Activated CD8-positive, alpha-beta memory T cell treated with anti-CD3 and anti-CD28 coated beads, Interleukin-2, amount 10 ng/mL, durations not matched to agents 7 days and 5 days (primary cell): ENCODE measurements at regions of chr1 and their contacts with region 1.

Region 1: DNA sequence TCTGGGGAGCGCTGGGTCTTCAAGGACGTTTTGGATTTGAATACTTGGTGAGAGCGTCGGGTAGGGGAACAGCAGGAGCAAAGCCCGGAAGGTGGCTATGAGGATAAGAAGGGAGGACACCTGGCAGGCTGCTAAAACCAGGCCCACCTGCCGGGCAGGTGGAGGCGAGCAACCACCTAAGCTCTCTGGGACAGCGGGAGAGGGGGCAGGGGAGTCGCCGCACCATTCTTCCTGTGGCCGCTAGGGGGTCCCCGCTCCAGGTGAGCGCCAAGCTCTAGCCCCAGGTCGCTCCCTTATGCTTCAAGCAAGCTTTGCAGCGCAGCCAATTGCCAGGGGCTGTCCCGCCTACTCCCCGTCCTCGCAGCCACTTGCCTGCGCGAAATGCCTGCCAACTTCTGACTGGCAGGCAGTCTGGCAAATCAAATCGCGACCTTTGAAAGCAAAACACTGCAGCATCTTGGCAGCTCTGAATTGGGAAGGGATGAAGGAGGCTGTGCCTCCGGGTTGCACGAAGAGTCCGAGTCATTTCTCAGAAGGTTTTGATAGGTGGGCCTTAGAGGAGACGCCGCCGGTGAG is at the start of gene NIPAL3:
- DNase-seq: peak; percentile 100
- ATAC-seq: peak; percentile 97
- H3K4me3 Mint-ChIP-seq: peak within 1 kb of the TSS; percentile 90
- H3K27ac Mint-ChIP-seq: peak within 1 kb of the TSS; percentile 87
- H3K4me1 Mint-ChIP-seq: peaks cover 53% of the 10 kb centered on the region
- H3K27me3 Mint-ChIP-seq: no peaks in the 10 kb centered on the region
- total RNA-seq, gene NIPAL3: 35.4 to 44.2 TPM

Region 2: DNA sequence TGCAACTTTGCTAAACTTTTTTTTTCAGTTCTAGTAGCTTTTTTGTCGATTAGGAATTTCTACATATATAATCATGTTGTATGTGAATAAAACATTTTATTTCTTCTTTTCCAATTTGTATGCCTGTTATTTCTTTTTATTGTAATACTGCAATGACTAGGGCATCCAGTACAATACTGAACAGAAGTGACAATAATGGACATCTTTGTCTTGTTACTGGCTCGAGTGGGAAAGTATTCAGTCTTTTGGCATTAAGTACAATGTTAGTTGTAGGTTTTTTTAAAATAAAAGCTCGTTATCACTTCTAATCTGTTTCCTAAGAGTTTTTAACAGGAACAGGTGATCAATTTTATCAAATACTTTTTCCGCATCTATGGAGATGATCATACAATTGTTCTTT is 11.6 kb before region 1 on chr1:
- CTCF ChIA-PET with region 1: interaction called, 15 read pairs
- DNase-seq: no peak
- ATAC-seq: no peak
- H3K4me3 Mint-ChIP-seq: no peak overlapping the region
- H3K27ac Mint-ChIP-seq: no peak overlapping the region
- H3K4me1 Mint-ChIP-seq: no peaks in the 10 kb centered on the region
- H3K27me3 Mint-ChIP-seq: no peaks in the 10 kb centered on the region

Region 3: GRCh38 chr1:24481101-24481500 is 65.7 kb after region 1 on chr1:
- CTCF ChIA-PET with region 1: interaction called, 18 read pairs
- DNase-seq: peak; percentile 70
- ATAC-seq: peak; percentile 67
- H3K4me3 Mint-ChIP-seq: peak overlapping the region; percentile 66
- H3K27ac Mint-ChIP-seq: peak overlapping the region; percentile 96
- H3K4me1 Mint-ChIP-seq: peaks cover 43% of the 10 kb centered on the region
- H3K27me3 Mint-ChIP-seq: no peaks in the 10 kb centered on the region

Region 4: GRCh38 chr1:24502709-24503058 is 87.3 kb after region 1 on chr1 and contains the start of gene RCAN3:
- CTCF ChIA-PET with region 1: interaction called, 72 read pairs
- DNase-seq: peak; percentile 95
- ATAC-seq: peak; percentile 87
- H3K4me3 Mint-ChIP-seq: peak within 1 kb of the TSS; percentile 95
- H3K27ac Mint-ChIP-seq: peak within 1 kb of the TSS; percentile 96
- H3K4me1 Mint-ChIP-seq: peaks cover 73% of the 10 kb centered on the region
- H3K27me3 Mint-ChIP-seq: no peaks in the 10 kb centered on the region
- total RNA-seq, gene RCAN3: 23.9 to 30.6 TPM

Region 5: DNA sequence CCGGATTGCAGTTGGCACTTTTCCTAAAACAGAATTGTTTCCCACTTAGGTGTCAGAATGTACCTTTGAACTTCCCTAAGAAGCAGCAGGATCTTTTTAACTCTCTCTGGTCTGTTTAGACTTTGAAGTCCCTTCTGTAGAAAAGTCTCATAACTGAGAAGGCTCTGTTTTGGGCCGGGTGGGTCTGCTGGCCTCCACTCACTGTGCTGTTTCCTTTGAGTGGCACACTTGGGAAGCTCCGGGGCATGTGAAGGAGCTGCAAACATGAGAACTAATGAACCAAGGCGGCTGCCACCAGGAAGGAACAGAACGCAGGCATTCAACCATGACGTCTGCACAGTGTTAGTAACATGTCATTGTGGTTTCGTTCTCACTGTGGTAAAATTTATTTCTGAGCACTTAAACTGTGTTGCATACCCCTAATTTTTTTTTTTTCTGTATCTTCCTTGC is 121.0 kb after region 1 on chr1:
- CTCF ChIA-PET with region 1: interaction called, 43 read pairs
- DNase-seq: peak; percentile 83
- ATAC-seq: peak; percentile 61
- H3K4me3 Mint-ChIP-seq: peak overlapping the region; percentile 85
- H3K27ac Mint-ChIP-seq: peak overlapping the region; percentile 97
- H3K4me1 Mint-ChIP-seq: peaks cover 69% of the 10 kb centered on the region
- H3K27me3 Mint-ChIP-seq: no peaks in the 10 kb centered on the region

Region 6: DNA sequence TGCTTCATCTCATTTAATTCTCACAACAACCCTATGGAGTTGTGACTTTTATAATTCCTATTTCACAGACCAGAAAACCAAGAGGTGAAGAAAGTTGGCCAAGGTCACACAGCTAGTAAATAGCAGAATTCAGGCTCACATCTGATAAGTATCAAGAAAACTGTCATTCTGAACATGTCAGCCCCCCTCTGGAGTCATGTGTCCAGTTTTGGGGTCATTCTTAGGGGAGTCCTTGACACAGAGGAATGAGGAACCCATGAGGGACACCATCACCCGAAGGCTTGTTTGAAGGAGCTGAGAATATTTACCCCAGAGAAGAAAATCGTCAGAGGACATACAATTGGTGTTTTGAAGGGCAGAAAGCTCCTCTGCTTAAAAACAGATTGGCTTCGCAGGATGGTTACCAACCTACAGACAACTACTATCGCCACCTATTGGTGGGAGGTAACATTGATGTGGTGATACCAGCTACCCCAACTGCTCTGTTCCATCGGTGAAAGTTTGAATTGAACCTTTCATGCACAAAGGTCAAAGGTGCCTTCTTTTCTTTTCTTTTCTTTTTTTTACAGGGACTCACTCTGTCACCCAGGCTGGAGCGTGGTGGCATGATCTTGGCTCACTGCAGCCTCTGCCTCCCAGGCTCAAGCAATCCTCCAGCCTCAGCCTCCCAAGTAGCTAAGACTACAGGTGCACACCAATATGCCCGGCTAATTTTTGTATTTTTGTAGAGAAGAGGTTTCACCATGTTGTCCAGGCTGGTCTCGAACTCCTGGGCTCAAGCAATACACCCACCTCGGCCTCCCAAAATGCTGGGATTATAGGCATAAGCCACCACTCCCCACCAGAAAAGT is 171.8 kb after region 1 on chr1:
- CTCF ChIA-PET with region 1: interaction called, 34 read pairs
- DNase-seq: peak; percentile 69
- ATAC-seq: peak; percentile 95
- H3K4me3 Mint-ChIP-seq: no peak overlapping the region
- H3K27ac Mint-ChIP-seq: peak overlapping the region; percentile 12
- H3K4me1 Mint-ChIP-seq: peaks cover 10% of the 10 kb centered on the region
- H3K27me3 Mint-ChIP-seq: peaks cover 7% of the 10 kb centered on the region